Mammary epithelial cell (primary cell): ENCODE measurements at regions of chr15 and their contacts with region 1.

Region 1: DNA sequence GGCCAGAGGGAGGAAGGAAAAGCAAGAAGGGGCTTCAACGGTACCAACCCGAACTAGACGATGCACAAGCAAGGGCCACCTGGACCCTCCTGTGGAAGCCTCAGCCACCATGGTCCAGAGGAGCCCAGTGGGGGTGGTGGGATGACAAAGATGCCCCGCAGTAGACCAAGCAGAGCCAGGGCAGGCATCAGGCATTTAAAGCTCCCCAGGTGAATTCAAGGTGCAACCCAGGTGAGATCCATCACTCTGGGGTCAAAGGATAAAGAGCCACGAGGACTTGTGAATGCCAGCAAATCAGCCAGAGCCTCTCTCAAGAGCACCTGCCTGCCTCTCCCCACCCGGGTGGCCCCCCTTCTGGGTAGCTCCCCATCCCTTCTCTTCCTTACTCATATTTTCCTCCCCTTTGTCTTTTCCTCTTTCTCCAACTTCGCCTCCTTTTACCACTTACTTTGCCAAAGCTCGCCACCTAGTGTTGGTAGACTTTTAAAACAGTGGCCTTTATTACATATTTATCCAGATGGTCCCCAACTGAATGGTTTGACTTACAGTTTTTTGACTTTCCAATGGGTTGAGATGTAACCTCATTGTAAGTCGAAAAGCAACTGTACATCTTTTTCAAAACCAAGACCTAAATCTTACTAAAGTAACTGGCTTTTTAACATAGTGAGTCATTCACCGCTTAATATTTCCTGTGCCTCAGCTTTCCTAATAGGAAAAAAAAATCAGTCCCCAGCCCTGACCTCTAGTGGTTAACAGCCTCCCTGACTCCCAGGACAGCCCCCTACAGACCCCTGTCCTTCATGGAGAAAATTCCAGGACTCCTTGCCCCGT is 18.8 kb downstream of the PLA2G4F start:
- DNase-seq: peak; percentile 40
- H3K4me3 ChIP-seq: no peak overlapping the region
- H3K27ac ChIP-seq: no peak overlapping the region
- H3K4me1 ChIP-seq: no peaks in the 10 kb centered on the region
- H3K27me3 ChIP-seq: no peaks in the 10 kb centered on the region
- CTCF ChIP-seq: peak; percentile 53 to 68

Region 2: GRCh38 chr15:41989259-41989933 is 148.2 kb before region 1 on chr15:
- CTCF ChIA-PET with region 1: no interaction called
- dilution Hi-C with region 1: no loop called
- in situ Hi-C with region 1: no loop called
- intact Hi-C with region 1: loop called (anchors 1 kb)
- DNase-seq: peak; percentile 53
- H3K4me3 ChIP-seq: no peak overlapping the region
- H3K27ac ChIP-seq: no peak overlapping the region
- H3K4me1 ChIP-seq: no peaks in the 10 kb centered on the region
- H3K27me3 ChIP-seq: no peaks in the 10 kb centered on the region
- CTCF ChIP-seq: peak; percentile 98 to 99

Region 3: DNA sequence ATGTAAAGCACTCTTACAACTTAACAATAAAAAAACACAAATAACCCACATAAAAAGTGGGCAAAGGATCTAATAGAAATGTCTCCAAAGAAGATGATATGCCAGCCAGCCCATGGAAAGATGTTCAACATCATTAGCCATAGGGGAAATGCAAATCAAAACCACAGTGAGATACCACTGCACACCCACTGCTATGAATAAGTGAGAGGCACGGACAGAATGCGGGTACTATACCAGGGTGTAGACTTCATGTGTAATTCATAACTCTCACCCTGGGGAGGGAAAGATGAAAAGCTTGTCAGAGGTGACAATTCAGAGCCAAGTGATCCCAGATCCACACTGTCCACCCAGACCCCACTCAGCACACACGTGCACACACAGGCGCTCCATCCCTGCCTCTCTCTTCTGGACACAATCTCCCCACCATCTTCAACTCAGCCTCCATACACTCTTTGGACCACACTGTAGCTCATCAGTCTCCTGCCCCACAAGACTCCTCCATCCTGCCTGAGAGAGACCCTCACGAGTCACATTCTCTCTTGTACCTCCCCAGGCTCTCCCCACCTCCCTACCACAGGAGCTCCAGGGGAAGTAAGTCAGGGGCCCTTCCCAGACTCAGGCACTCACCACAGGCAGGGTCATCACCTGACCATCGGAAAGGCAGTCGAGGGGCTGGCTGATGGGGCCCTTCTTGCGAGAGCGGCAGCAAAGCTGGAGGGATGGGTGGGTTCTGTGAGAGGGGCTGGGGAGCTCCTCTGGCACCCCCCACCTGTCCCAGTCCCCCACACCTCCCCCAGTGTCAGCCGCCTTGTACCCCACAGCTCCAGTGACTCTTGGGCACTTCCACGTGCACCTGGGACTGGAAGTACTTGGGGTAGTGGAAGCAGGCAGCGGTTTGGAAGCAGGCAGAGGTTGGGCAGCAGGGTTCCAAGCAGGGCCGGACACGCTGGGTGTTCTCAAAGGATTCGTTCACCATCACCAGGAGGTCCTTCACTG is 138.1 kb before region 1 on chr15:
- CTCF ChIA-PET with region 1: no interaction called
- dilution Hi-C with region 1: no loop called
- in situ Hi-C with region 1: loop called in 1 of 2 experiments (anchors 10 kb)
- intact Hi-C with region 1: no loop called
- DNase-seq: no peak
- H3K4me3 ChIP-seq: no peak overlapping the region
- H3K27ac ChIP-seq: no peak overlapping the region
- H3K4me1 ChIP-seq: no peaks in the 10 kb centered on the region
- H3K27me3 ChIP-seq: no peaks in the 10 kb centered on the region
- CTCF ChIP-seq: no peak

Region 4: GRCh38 chr15:42034628-42035434 is 102.8 kb before region 1 on chr15:
- CTCF ChIA-PET with region 1: no interaction called
- dilution Hi-C with region 1: no loop called
- in situ Hi-C with region 1: no loop called
- intact Hi-C with region 1: no loop called
- DNase-seq: no peak
- H3K4me3 ChIP-seq: peak overlapping the region in 1 of 3 experiments; percentile 0
- H3K27ac ChIP-seq: peak overlapping the region; percentile 36
- H3K4me1 ChIP-seq: peaks cover 39% of the 10 kb centered on the region
- H3K27me3 ChIP-seq: no peaks in the 10 kb centered on the region
- CTCF ChIP-seq: no peak

Region 5: GRCh38 chr15:42065033-42065432 is 72.6 kb before region 1 on chr15:
- CTCF ChIA-PET with region 1: no interaction called
- dilution Hi-C with region 1: no loop called
- in situ Hi-C with region 1: loop called in 1 of 2 experiments (anchors 5 kb)
- intact Hi-C with region 1: loop called (anchors 1 kb)
- DNase-seq: no peak
- H3K4me3 ChIP-seq: no peak overlapping the region
- H3K27ac ChIP-seq: no peak overlapping the region
- H3K4me1 ChIP-seq: peaks cover 3% of the 10 kb centered on the region
- H3K27me3 ChIP-seq: no peaks in the 10 kb centered on the region
- CTCF ChIP-seq: no peak

Region 6: DNA sequence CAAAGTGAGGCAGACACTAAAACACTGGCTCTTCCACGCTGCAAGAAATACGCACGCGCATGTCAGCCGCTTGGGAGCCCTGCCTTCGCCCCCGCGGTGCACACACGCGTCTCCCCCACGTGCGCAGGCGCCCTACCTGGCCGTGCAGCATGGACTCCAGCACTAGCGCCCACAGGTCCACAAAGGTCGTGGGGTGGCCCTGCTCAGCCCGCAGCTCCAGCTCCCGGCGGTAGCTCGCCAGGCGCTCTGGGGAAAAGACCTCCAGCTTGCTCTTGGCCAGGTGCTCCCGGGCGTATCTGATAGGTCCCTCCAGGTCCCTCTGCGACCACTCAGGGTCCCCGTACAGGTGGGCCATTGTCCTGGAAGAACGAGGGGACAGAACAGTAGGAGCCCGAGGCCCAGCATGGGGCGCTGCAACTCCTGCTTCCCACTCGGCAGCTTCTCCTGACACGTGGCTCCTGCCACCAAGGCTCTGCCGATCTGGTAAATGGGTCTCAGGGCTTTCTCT is 58.2 kb before region 1 on chr15:
- CTCF ChIA-PET with region 1: interaction called, 5 read pairs
- dilution Hi-C with region 1: loop called (anchors 5 kb)
- in situ Hi-C with region 1: loop called in 1 of 2 experiments (anchors 5 kb)
- intact Hi-C with region 1: loop called (anchors 1 kb)
- DNase-seq: no peak
- H3K4me3 ChIP-seq: no peak overlapping the region
- H3K27ac ChIP-seq: no peak overlapping the region
- H3K4me1 ChIP-seq: peaks cover 13% of the 10 kb centered on the region
- H3K27me3 ChIP-seq: no peaks in the 10 kb centered on the region
- CTCF ChIP-seq: no peak

Region 7: DNA sequence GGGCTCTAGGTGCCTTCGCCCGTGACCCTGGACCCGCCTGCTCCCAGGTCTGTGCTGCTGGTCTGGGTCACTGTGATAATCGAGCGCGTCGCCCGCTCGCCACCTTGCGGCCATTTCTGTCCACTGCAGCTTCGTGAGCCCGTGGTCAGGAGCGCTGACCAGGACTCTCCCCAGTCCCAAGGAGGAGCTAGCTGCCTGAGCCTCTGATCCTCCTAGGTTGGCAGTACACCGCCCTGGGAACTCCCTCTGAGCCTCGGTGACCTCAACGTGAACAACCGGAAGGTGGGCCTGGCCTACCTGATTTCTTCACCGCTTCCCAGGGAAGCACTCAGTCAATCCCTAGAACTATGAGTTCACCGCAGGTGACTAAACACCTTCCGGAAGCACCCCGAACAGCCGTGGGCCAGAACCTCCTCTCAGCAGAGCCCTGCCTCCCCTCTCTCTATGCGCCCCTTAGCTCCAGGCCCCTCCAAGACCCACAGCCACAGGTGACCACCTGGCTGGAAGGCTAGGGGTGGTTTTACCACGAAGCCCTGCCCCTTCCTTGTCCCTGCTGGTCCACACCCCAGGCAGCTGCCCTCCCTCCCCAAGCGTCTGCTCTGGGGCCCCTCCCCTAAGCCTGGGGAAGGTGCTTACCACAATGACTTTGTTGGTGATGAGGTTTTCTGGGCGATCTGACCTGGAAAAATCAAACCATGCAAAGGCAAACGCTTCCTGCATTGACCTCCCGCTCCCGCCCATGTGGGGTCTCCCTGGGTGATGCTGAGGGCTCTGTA is 53.0 kb before region 1 on chr15:
- CTCF ChIA-PET with region 1: interaction called, 5 read pairs
- dilution Hi-C with region 1: loop called (anchors 5 kb)
- in situ Hi-C with region 1: loop called in 1 of 2 experiments (anchors 5 kb)
- intact Hi-C with region 1: loop called (anchors 1 kb)
- DNase-seq: peak; percentile 94
- H3K4me3 ChIP-seq: no peak overlapping the region
- H3K27ac ChIP-seq: peak overlapping the region; percentile 42
- H3K4me1 ChIP-seq: peaks cover 24% of the 10 kb centered on the region
- H3K27me3 ChIP-seq: no peaks in the 10 kb centered on the region
- CTCF ChIP-seq: peak; percentile 86 to 91